CD4-positive, alpha-beta T cell (primary cell): ENCODE measurements at regions of chr1 and their contacts with region 1.

Region 1: DNA sequence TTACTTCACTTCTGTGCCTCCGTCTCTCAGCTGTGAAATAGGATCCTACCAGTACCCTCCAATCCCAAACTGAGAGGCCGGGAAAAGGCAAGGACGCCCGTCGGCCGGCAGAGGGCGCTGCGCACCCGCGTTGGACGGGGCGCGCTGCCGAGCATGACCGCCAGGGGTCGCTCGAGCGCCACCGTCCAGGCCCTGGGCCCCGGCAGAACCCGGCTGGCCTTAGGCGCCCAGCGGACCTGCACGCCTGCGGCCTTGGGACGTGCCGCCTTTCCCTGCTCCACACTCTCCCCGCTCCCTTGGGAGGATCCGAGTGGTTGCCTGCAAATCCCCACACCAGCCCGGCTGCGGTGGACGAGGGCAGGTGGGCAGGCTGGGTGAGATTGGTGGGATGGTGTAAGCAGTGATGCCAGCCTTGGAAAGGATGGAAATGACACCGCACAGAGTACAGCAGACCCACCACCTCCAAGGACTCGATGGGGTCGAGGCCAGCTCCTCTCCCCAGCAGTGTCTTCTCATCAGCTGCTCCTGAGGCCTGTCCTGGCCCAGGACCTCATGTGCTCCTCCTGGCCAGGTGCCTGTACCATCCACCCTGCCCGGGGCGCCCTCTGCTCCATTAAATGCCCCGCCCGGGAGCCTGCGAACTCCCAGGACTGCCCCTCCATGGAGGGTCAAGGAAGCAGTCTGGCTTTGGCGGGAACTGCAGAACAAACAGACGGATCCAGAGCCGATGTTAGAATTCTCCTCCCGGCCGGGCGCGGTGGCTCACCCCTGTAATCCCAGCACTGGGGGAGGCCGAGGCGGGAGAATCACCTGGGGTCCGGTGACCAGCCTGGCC is 47.4 kb upstream of the LBR start:
- DNase-seq: peak; percentile 27 to 88 (median 60)
- ATAC-seq: peak; percentile 85
- H3K4me3 ChIP-seq: no peak overlapping the region
- H3K4me3 Mint-ChIP-seq: no peak overlapping the region
- H3K27ac ChIP-seq: no peak overlapping the region
- H3K27ac Mint-ChIP-seq: peak overlapping the region; percentile 39
- H3K4me1 ChIP-seq: peaks cover 55% of the 10 kb centered on the region
- H3K4me1 Mint-ChIP-seq: peaks cover 42% of the 10 kb centered on the region
- H3K27me3 ChIP-seq: no peaks in the 10 kb centered on the region
- H3K27me3 Mint-ChIP-seq: no peaks in the 10 kb centered on the region
- CTCF ChIP-seq: peak; percentile 100

Region 2: DNA sequence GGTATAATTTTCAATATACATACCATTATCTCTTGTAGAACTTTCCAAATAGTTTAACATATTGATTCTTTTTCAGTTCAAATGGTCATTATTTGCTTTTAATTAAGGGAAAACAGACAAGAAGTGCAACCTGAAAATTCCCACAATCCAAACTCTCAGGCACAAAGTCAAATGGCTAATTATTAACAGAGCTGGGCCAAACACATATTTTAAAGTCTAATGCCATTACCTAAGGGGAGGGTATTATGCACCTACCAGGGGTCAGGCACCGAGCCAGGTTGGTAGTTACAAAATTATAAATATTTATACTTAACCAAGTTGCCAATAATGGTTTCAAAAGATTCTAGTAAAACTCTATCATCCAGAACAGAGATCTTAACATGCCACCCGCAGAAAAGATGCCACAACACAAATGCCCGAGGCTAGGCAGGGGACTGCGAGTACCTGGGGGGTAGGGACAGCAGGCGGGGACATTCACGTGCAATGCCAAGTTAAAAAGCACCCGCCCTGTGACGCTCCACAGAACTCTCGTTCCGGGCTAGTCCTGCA is 62.3 kb before region 1 on chr1:
- CTCF ChIA-PET with region 1: no interaction called
- POLR2A ChIA-PET with region 1: no interaction called
- intact Hi-C with region 1: no loop called
- DNase-seq: no peak
- ATAC-seq: no peak
- H3K4me3 ChIP-seq: no peak overlapping the region
- H3K4me3 Mint-ChIP-seq: no peak overlapping the region
- H3K27ac ChIP-seq: no peak overlapping the region
- H3K27ac Mint-ChIP-seq: no peak overlapping the region
- H3K4me1 ChIP-seq: no peaks in the 10 kb centered on the region
- H3K4me1 Mint-ChIP-seq: peaks cover 12% of the 10 kb centered on the region
- H3K27me3 ChIP-seq: no peaks in the 10 kb centered on the region
- H3K27me3 Mint-ChIP-seq: no peaks in the 10 kb centered on the region
- CTCF ChIP-seq: no peak

Region 3: DNA sequence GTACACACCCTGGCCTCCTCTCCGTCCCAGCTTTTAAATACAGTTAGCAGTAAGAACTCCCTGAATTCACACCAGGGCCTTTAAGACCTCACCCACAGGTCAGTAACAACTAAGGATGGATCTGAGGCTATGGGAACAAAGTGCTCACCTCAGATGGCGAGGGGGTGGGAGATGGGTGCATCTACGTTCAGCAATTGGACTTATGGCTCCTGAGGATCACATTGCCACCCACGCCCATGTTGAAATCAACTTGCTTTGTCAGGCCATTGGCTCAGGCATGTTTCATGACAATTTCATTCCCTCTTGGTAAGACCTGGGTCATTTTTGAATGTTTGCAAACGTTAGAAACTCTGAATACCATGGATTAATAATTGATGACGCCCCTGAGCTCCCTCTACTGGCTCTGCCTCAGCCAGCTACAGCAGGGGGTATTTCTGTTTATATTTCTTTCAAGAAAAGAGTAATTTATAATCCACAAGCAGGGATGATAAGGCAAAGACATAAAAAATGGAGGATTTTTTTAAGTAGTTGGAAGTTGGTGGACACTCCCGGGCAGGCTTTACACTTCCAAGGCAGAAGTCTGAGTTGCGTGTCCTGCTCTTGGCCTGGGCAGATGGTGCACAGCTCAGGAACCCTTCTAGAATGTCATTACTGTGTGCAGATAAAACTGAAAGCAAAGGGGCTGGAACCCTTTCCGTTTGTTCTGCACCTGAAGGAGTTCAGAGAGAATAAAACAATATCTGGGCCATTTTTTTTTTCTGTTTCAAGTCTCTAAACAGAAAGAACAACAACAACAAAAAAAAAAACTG is 33.7 kb before region 1 on chr1:
- CTCF ChIA-PET with region 1: interaction called, 10 read pairs
- POLR2A ChIA-PET with region 1: interaction called, 9 read pairs
- intact Hi-C with region 1: no loop called
- DNase-seq: peak in 2 of 14 experiments; percentile 21 to 26
- ATAC-seq: no peak
- H3K4me3 ChIP-seq: no peak overlapping the region
- H3K4me3 Mint-ChIP-seq: peak overlapping the region; percentile 66
- H3K27ac ChIP-seq: peak overlapping the region in 1 of 2 donors; percentile 4
- H3K27ac Mint-ChIP-seq: peak overlapping the region; percentile 61
- H3K4me1 ChIP-seq: peaks cover 54% of the 10 kb centered on the region
- H3K4me1 Mint-ChIP-seq: peaks cover 53% of the 10 kb centered on the region
- H3K27me3 ChIP-seq: no peaks in the 10 kb centered on the region
- H3K27me3 Mint-ChIP-seq: no peaks in the 10 kb centered on the region
- CTCF ChIP-seq: peak; percentile 27

Region 4: DNA sequence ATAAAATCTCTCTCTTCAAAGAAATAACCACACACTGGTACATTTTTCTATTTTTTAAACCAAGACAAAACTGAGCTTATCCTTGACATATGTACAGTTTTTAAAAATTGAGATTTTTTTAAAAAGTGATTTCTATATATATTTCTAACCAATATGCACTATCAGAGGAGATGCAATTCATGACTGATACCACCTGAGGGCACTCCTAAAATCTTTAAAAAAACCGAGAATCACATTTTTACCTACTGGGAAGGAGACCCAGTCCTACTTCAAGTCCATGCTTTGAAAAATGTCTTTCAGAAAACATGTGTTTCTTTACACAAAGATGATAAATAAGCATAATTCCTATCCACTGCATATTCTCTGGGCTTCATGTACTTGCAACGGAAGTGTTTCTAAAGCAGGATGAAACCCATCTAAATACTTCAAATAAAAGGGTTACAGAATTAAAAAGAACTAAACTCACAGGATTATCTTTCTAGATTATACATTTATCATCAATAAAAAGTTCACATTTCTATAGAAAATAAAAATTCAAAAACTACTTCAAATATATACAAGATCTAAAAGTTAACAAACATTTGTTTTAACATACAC is 79.1 kb after region 1 on chr1:
- CTCF ChIA-PET with region 1: no interaction called
- POLR2A ChIA-PET with region 1: no interaction called
- intact Hi-C with region 1: loop called in 1 of 2 experiments (anchors 2 kb)
- DNase-seq: peak in 3 of 14 experiments; percentile 30 to 44 (median 34)
- ATAC-seq: no peak
- H3K4me3 ChIP-seq: no peak overlapping the region
- H3K4me3 Mint-ChIP-seq: no peak overlapping the region
- H3K27ac ChIP-seq: no peak overlapping the region
- H3K27ac Mint-ChIP-seq: no peak overlapping the region
- H3K4me1 ChIP-seq: no peaks in the 10 kb centered on the region
- H3K4me1 Mint-ChIP-seq: no peaks in the 10 kb centered on the region
- H3K27me3 ChIP-seq: peaks cover 0 to under 1% of the 10 kb centered on the region in 2 experiments
- H3K27me3 Mint-ChIP-seq: peaks cover 4% of the 10 kb centered on the region
- CTCF ChIP-seq: peak; percentile 67

Region 5: DNA sequence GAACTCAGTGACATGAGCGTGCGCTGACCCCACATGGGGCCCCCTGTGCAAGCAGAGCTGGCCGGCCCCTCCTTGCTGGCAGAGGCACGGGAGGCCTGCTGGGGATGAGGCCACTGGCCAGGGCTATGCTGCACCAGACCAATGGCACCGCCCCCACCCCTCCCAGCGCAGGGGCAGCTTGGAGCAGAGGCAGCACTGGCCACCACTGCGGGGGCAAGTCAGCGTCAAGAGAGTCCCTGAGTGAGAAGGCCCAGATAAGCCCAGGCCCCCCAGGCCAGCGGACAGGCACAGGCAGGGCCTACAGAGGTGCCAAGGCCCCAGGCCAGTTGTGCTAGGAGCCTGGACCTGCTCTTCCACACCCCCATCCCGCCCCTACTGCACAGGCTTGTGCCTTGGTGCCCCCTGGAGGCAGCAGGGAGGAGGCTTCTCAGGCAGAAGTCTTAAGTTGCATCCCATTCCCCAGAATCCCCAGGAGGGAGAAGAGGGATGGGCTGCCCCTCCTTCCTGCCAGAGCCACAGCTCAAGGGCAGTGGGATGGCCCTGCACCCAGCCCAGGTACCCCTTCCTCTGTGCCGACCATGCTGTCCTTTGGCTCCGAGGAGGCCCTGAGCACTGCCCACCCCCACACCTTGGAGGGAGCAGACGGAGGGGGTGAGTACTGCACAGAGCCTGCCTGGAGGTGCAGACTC is 370.5 kb after region 1 on chr1:
- CTCF ChIA-PET with region 1: no interaction called
- POLR2A ChIA-PET with region 1: no interaction called
- intact Hi-C with region 1: loop called in 1 of 2 experiments (anchors 5 kb)
- DNase-seq: peak in 8 of 14 experiments; percentile 16 to 66 (median 35)
- ATAC-seq: no peak
- H3K4me3 ChIP-seq: no peak overlapping the region
- H3K4me3 Mint-ChIP-seq: no peak overlapping the region
- H3K27ac ChIP-seq: no peak overlapping the region
- H3K27ac Mint-ChIP-seq: peak overlapping the region; percentile 96
- H3K4me1 ChIP-seq: peaks cover 40% of the 10 kb centered on the region
- H3K4me1 Mint-ChIP-seq: peaks cover 58% of the 10 kb centered on the region
- H3K27me3 ChIP-seq: no peaks in the 10 kb centered on the region
- H3K27me3 Mint-ChIP-seq: no peaks in the 10 kb centered on the region
- CTCF ChIP-seq: peak; percentile 35

Region 6: GRCh38 chr1:225977937-225978748 is 502.9 kb after region 1 on chr1:
- CTCF ChIA-PET with region 1: interaction called, 15 read pairs
- POLR2A ChIA-PET with region 1: interaction called, 4 read pairs
- intact Hi-C with region 1: loop called (anchors 1 kb)
- DNase-seq: peak in 1 of 14 experiments; percentile 7
- ATAC-seq: no peak
- H3K4me3 ChIP-seq: no peak overlapping the region
- H3K4me3 Mint-ChIP-seq: no peak overlapping the region
- H3K27ac ChIP-seq: no peak overlapping the region
- H3K27ac Mint-ChIP-seq: no peak overlapping the region
- H3K4me1 ChIP-seq: peaks cover 5% of the 10 kb centered on the region
- H3K4me1 Mint-ChIP-seq: peaks cover 6% of the 10 kb centered on the region
- H3K27me3 ChIP-seq: no peaks in the 10 kb centered on the region
- H3K27me3 Mint-ChIP-seq: no peaks in the 10 kb centered on the region
- CTCF ChIP-seq: no peak